ENCODE measurements at regions of chr3 and their contacts with region 1.

Region 1: GRCh38 chr3:86766331-86766730 is 224.6 kb downstream of the VGLL3 start:
- DNase-seq: no peak
- H3K4me3 Mint-ChIP-seq: no peak overlapping the region
- H3K27ac Mint-ChIP-seq: no peak overlapping the region
- H3K4me1 Mint-ChIP-seq: peaks cover 10% of the 10 kb centered on the region
- H3K27me3 Mint-ChIP-seq: peaks cover 11% of the 10 kb centered on the region
- CTCF ChIP-seq: no peak

Region 2: GRCh38 chr3:86702381-86702958 is 63.9 kb before region 1 on chr3:
- CTCF ChIA-PET with region 1: no interaction called
- intact Hi-C with region 1: loop called (anchors 5 kb)
- DNase-seq: no peak
- H3K4me3 Mint-ChIP-seq: no peak overlapping the region
- H3K27ac Mint-ChIP-seq: no peak overlapping the region
- H3K4me1 Mint-ChIP-seq: no peaks in the 10 kb centered on the region
- H3K27me3 Mint-ChIP-seq: peaks cover 27% of the 10 kb centered on the region
- CTCF ChIP-seq: peak; percentile 34

Region 3: DNA sequence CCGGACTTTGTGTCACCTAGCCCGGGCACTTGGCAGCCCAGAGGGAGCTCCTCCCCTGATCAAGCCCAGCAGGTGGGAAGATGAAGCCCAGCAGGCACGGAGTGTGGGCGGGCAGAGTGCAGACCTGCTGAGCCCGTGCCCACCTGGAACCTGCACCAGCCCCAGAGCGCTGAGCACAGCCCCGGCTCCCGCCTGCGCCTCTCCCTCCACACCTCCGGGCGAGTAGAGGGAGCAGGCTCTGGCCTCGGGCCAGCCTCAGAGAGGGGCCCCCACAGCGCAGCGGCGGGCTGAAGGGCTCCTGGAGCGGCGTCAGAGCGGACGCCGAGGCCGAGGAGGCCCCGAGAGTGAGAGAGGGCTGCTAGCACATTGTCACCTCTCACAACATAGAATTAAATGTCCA is 33.1 kb before region 1 on chr3:
- CTCF ChIA-PET with region 1: no interaction called
- intact Hi-C with region 1: no loop called
- DNase-seq: no peak
- H3K4me3 Mint-ChIP-seq: no peak overlapping the region
- H3K27ac Mint-ChIP-seq: no peak overlapping the region
- H3K4me1 Mint-ChIP-seq: no peaks in the 10 kb centered on the region
- H3K27me3 Mint-ChIP-seq: no peaks in the 10 kb centered on the region
- CTCF ChIP-seq: no peak

Region 4: DNA sequence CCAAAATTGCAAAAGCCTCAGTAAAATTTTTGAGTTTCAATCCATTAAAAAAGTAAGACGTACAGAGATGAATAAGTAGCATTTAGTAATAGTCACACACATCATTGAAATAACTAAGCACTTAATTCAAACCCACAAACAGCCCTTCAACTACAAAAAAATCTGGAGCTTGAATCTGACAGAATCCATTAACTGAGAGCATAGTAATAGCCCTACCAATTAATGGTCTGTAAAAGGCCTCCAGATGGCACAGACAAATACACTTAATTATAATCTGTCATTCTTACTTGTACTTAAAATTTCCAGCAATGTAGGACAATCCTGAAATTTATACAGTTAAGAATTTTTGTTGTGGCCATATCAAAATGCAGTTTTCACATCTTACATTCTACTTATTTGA is 22.3 kb before region 1 on chr3:
- CTCF ChIA-PET with region 1: no interaction called
- intact Hi-C with region 1: no loop called
- DNase-seq: no peak
- H3K4me3 Mint-ChIP-seq: no peak overlapping the region
- H3K27ac Mint-ChIP-seq: no peak overlapping the region
- H3K4me1 Mint-ChIP-seq: no peaks in the 10 kb centered on the region
- H3K27me3 Mint-ChIP-seq: peaks cover 25% of the 10 kb centered on the region
- CTCF ChIP-seq: no peak

Measured in Calu3 (cell line).